Endothelial cell of umbilical vein (primary cell): ENCODE measurements at regions of chr1 and their contacts with region 1.

Region 1: DNA sequence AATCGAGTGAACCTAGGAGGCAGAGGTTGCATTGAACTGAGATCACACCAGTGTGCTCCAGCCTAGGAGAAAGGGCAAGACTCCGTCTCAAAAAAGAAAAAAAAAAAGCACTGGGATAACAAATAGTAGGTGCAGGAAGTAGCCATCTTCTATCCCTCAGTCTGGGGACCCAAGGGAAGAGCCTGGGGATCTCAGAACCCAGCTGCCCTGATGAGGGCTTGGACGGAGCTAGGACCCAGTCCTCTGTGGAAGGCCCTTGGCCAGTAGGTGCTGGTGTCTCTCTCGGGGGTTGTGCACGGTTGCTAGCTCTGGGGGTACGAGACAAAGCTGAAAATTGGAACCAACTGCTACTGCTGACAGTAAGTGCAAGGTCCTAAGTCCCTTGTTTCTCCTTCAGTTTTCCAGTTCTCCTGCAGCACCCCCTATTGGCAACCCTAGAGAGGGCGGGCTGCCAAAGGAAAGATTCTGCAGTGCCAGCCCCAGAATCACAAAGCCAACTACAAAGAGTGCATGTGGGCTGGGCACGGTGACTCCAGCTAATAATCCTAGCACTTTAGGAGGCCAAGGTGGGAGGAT is 57.6 kb upstream of the KIF1B start:
- DNase-seq: peak; percentile 58
- H3K4me3 ChIP-seq: no peak overlapping the region
- H3K27ac ChIP-seq: no peak overlapping the region
- H3K4me1 ChIP-seq: no peaks in the 10 kb centered on the region
- H3K27me3 ChIP-seq: no peaks in the 10 kb centered on the region
- CTCF ChIP-seq: peak; percentile 72 to 76
- POLR2A ChIP-seq: no peak

Region 2: DNA sequence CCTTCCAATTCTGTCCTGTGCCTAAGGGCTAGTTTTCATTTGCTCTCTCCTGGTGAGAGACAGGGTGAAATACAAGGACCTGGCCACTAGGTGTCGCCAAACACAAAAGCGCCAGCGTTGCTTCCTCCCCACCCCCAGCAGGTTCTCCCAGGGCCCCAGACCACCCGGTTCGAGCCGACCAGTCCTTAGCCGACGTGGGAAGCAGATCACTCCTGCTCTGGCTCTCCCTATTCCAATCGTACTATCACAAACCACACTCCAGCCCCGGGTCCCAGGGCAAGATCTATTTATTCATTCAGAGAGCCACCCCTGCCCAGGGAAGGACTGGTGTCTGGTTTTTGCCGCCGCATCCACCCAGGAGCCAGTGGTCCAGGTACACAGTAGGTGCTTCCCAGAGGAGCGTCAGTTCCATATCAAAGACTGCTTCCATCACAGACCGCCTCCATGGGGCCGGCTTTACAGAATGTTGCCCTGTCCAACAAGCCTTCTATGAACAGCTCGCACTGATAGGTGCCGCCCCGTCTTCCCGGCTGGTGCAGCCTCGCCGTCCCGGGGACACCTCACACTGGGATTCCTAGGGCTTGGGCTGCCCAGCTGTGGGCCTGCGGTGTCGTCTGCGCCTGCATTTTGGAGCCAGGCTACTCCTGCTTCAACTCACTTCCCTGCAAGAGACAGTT is 277.7 kb before region 1 on chr1:
- CTCF ChIA-PET with region 1: interaction called, 6 read pairs
- POLR2A ChIA-PET with region 1: no interaction called
- dilution Hi-C with region 1: no loop called
- intact Hi-C with region 1: loop called (anchors 1 kb)
- DNase-seq: peak; percentile 71
- H3K4me3 ChIP-seq: no peak overlapping the region
- H3K27ac ChIP-seq: no peak overlapping the region
- H3K4me1 ChIP-seq: no peaks in the 10 kb centered on the region
- H3K27me3 ChIP-seq: no peaks in the 10 kb centered on the region
- CTCF ChIP-seq: peak; percentile 85 to 92
- POLR2A ChIP-seq: no peak

Region 3: DNA sequence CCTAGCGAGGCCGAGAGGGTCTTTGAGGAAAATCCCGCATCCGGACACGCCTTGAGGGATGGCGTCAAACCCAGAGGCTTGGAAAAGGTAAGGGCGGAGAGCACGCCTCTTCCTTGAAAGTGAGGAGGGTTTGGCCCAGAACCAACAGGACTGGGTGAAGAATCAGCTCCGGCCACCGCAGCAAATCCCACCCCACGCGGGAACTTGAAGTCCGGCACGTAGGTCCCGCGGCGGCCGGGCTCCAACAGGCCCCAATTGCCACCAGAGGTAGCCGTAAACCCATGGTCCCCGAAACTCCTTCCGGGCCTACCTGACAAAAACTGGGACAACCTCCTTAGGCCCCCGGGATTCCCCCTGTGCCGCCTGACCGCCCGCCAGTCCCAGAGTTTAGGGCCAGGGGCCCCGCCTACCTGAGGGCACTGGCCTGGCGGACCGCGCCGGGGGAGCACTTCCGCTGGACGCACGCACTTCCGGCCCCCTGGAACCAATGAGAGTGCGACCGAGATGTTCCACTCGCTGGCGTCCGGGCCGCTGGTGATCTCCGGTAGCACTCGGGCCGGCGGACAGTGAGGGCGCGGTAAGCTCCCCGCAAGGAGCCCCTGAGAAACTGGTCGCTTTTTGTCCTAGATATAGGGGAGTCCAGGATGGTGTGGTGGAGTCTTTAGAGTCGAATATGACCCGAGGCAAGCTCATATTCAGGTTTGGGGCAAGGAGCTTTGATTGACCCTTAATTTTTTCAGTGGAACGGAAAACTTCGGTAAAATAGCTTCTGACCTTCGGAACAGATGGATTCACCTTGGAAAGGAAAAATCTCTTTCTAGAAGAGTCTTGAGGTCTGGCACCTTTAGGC is 209.6 kb before region 1 on chr1 and contains the starts of genes LZIC and NMNAT1:
- CTCF ChIA-PET with region 1: interaction called, 11 read pairs
- POLR2A ChIA-PET with region 1: no interaction called
- dilution Hi-C with region 1: no loop called
- intact Hi-C with region 1: loop called (anchors 1 kb)
- DNase-seq: peak; percentile 94
- H3K4me3 ChIP-seq: peak within 1 kb of the TSS; percentile 79 to 99 (median 95)
- H3K27ac ChIP-seq: peak within 1 kb of the TSS; percentile 91
- H3K4me1 ChIP-seq: peaks cover 4% of the 10 kb centered on the region
- H3K27me3 ChIP-seq: no peaks in the 10 kb centered on the region
- CTCF ChIP-seq: no peak
- POLR2A ChIP-seq: peak; percentile 96
- total RNA-seq, gene LZIC: 22.7 and 23.4 TPM in 2 replicates
- total RNA-seq, gene NMNAT1: 7.4 and 9.8 TPM in 2 replicates

Region 4: DNA sequence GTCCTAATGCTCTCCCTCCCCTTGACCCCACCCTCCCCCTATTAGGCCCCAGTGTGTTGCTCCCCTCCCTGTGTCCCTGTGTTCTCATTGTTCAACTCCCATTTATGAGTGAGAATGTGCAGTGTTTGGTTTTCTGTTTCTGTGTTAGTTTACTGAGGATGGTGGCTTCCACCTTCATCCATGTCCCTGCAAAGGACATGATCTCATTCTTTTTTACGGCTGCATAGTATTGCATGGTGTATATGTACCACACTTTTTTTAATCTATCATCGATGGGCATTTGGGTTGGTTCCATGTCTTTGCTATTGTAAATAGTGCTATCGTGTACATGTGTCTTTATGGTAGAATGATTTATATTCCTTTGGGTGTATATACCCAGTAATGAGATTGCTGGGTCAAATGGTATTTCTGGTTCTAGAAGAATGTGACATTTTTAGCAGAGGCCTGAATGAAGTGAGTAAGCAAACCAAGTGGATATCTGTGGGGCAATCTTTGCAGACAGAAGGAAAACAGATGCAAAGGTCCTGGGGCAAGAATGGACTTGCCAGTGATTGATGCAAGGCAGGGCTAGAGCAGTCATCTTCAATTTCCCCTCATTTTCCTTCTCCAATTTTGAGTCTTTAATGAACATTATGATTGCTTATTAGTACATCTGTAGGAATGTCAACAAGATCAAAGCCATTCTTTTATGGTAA is 69.9 kb before region 1 on chr1:
- CTCF ChIA-PET with region 1: no interaction called
- POLR2A ChIA-PET with region 1: no interaction called
- dilution Hi-C with region 1: no loop called
- intact Hi-C with region 1: no loop called
- DNase-seq: no peak
- H3K4me3 ChIP-seq: no peak overlapping the region
- H3K27ac ChIP-seq: no peak overlapping the region
- H3K4me1 ChIP-seq: no peaks in the 10 kb centered on the region
- H3K27me3 ChIP-seq: no peaks in the 10 kb centered on the region
- CTCF ChIP-seq: no peak
- POLR2A ChIP-seq: no peak

Region 5: GRCh38 chr1:10338047-10338446 is 185.2 kb after region 1 on chr1:
- CTCF ChIA-PET with region 1: interaction called, 4 read pairs
- POLR2A ChIA-PET with region 1: no interaction called
- dilution Hi-C with region 1: no loop called
- intact Hi-C with region 1: loop called (anchors 5 kb)
- DNase-seq: peak; percentile 58
- H3K4me3 ChIP-seq: no peak overlapping the region
- H3K27ac ChIP-seq: no peak overlapping the region
- H3K4me1 ChIP-seq: peaks cover 10% of the 10 kb centered on the region
- H3K27me3 ChIP-seq: no peaks in the 10 kb centered on the region
- CTCF ChIP-seq: peak; percentile 65 to 75
- POLR2A ChIP-seq: no peak